Mammary epithelial cell (primary cell): ENCODE measurements at regions of chr14 and their contacts with region 1.

Region 1: DNA sequence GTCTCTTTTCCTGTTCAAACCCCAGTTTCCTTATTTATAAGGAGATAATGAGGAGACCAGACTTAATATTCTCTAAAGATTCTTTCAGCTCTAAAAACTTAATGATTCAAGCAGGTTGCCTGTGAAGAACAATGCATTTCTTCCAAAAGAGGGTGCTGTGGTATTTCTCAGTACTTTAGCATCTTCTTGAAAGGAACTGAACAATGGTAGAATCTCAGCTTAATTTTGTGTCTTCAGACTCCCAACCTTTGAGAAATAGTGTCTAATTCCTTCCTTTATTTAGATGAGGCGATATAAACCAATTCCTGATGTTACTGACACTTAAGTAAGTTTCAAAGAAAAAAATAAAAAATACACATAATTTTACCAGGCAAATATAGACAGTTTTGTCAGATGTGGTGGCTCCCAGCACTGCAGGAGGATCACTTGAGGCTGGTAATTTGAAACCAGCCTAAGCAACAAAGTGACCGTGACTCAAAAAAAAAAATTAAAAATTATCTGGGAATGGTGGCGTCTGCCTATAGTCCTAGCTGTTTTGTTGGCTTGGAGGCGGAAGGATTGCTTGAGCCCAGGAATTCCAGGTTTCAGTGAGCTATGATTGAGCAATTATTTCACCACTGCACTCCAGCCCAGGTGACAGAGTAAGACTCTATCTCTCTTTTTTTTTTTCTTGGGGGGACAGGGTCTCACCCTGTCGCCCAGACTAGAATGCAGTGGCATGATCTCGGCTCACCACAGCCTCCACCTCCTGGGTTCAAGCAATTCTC is 76.9 kb upstream of the PSMA6 start:
- DNase-seq: peak; percentile 31
- H3K4me3 ChIP-seq: no peak overlapping the region
- H3K27ac ChIP-seq: peak overlapping the region; percentile 70
- H3K4me1 ChIP-seq: peaks cover 28% of the 10 kb centered on the region
- H3K27me3 ChIP-seq: no peaks in the 10 kb centered on the region
- CTCF ChIP-seq: peak; percentile 19 to 51

Region 2: DNA sequence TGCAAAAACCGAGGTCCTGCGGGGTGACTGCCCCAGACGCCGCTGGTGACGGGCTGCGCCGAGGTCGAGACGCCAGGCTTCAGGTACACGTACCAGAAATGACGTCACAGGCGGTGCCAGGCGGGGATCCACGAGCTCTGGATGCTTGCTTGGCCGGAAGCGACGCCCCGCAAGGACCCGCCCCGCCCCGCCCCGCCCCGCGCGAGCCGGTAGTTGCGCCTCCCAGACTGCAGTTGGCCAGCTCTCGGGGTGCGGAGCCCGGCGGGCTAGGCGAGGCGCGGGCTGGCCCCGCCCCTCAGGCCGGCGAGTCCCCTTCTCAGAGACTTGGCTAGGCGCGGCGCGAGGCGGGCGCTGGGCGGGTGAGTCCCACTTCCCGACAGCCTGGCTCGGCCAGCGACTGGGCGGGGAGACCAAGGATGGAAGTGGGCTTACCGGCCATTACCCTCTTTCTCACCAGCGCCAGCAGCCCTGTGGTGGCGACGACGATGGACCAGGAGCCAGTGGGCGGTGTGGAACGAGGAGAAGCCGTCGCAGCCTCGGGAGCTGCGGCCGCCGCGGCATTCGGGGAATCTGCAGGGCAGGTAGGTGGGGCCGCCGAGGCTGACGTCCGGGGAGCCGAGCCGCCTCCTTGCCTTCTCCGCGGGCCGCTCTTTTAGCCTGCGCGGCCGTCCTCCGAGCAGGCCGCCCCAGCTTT is 169.1 kb before region 1 on chr14 and contains the start of gene FAM177A1:
- CTCF ChIA-PET with region 1: interaction called, 3 read pairs
- dilution Hi-C with region 1: no loop called
- in situ Hi-C with region 1: no loop called
- intact Hi-C with region 1: loop called (anchors 10 kb)
- DNase-seq: peak; percentile 98
- H3K4me3 ChIP-seq: peak within 1 kb of the TSS; percentile 88 to 98 (median 91)
- H3K27ac ChIP-seq: peak within 1 kb of the TSS; percentile 97
- H3K4me1 ChIP-seq: peaks cover 11% of the 10 kb centered on the region
- H3K27me3 ChIP-seq: no peaks in the 10 kb centered on the region
- CTCF ChIP-seq: no peak
- total RNA-seq, gene FAM177A1: 30.2 to 84.2 TPM

Region 3: DNA sequence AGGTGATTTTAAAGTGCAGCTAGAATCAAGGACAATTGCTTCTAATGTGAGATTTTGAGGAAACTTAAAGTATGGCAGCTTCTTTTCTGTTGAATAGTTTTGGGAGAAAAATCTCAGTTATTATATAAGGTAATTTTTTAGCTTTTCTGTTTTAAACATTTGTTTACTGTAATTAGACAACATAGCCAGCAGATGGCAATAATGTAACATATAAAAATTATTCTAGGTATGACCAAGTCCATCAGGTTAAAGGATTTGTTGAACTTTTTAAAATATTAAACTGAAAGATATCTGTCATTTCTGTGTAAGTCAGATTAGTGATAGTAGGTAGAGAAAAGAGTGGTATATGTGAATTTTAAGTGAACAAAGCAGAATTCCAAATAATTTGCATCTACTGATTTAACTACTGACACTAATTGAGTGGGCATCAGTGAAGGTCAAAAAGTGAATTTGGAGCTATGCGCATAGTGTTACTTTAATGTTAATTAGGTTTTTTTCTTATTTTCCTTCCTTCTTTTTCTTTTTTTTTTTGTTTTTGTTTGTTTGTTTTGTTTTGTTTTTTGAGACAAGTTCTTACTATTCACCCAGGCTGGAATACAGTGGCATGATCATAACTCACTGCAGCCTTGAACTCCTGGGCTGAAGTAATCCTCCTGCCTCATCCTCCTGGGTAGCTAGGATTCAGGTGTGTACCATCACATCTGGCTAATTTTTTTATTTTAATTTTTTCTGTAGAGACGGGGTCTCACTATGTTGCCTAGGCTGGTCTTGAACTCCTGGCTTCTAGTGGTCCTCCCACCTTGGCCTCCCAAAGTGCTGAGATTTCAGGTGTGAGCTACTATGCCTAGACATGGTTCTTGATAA is 74.3 kb before region 1 on chr14:
- CTCF ChIA-PET with region 1: no interaction called
- dilution Hi-C with region 1: no loop called
- in situ Hi-C with region 1: no loop called
- intact Hi-C with region 1: loop called (anchors 5 kb)
- DNase-seq: no peak
- H3K4me3 ChIP-seq: no peak overlapping the region
- H3K27ac ChIP-seq: no peak overlapping the region
- H3K4me1 ChIP-seq: no peaks in the 10 kb centered on the region
- H3K27me3 ChIP-seq: no peaks in the 10 kb centered on the region
- CTCF ChIP-seq: peak; percentile 16 to 34

Region 4: DNA sequence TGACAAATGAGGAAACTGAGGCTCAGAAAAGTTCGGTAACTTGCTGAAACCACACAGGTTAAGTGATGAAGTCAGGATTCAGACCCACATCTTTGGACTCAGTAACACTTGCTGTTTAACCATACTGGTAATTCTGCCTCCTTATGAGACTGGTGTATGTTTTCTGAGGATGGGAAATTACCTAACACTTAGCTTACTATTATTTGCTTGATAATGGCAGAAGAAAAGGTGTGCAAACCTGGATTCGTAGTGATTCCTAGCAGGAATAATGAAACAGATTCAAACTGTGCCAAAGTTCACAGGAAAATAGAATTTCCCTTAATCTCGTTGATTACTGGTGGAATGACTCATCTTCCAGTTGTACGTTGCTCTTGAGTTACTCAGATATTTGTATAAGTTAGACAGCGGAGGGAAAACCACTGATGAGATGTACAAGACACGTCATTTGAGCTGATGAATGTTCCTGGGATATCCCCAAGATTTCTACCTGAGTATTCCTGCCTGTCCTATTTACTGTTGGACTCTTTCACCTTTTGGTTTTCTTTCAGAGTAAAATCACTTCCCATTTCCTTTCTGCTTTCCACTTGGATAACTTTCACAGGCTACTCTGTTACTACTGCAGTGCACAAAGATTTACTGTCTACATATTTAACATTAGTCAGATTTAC is 55.4 kb before region 1 on chr14:
- CTCF ChIA-PET with region 1: no interaction called
- dilution Hi-C with region 1: no loop called
- in situ Hi-C with region 1: loop called in 1 of 2 experiments (anchors 10 kb)
- intact Hi-C with region 1: loop called (anchors 1 kb)
- DNase-seq: peak; percentile 98
- H3K4me3 ChIP-seq: no peak overlapping the region
- H3K27ac ChIP-seq: peak overlapping the region; percentile 84
- H3K4me1 ChIP-seq: peaks cover 34% of the 10 kb centered on the region
- H3K27me3 ChIP-seq: no peaks in the 10 kb centered on the region
- CTCF ChIP-seq: no peak

Region 5: GRCh38 chr14:35229495-35230089 is 14.3 kb after region 1 on chr14:
- CTCF ChIA-PET with region 1: interaction called, 12 read pairs
- dilution Hi-C with region 1: no loop called
- in situ Hi-C with region 1: no loop called
- intact Hi-C with region 1: no loop called
- DNase-seq: no peak
- H3K4me3 ChIP-seq: no peak overlapping the region
- H3K27ac ChIP-seq: no peak overlapping the region
- H3K4me1 ChIP-seq: peaks cover 5% of the 10 kb centered on the region
- H3K27me3 ChIP-seq: no peaks in the 10 kb centered on the region
- CTCF ChIP-seq: peak; percentile 12 to 34